ENCODE measurements at regions of chr5 and their contacts with region 1.

Region 1: GRCh38 chr5:58037899-58038298 is 422.0 kb downstream of the PLK2 start:
- DNase-seq: no peak
- H3K4me3 Mint-ChIP-seq: no peak overlapping the region
- H3K27ac Mint-ChIP-seq: no peak overlapping the region
- H3K4me1 Mint-ChIP-seq: no peaks in the 10 kb centered on the region
- H3K27me3 Mint-ChIP-seq: no peaks in the 10 kb centered on the region

Region 2: GRCh38 chr5:58025809-58026208 is 12.1 kb before region 1 on chr5:
- intact Hi-C with region 1: loop called (anchors 1 kb)
- DNase-seq: no peak
- H3K4me3 Mint-ChIP-seq: no peak overlapping the region
- H3K27ac Mint-ChIP-seq: no peak overlapping the region
- H3K4me1 Mint-ChIP-seq: no peaks in the 10 kb centered on the region
- H3K27me3 Mint-ChIP-seq: no peaks in the 10 kb centered on the region